Gastrocnemius medialis (tissue), 4 donors: ENCODE measurements at regions of chr17 and their contacts with region 1.

Region 1: GRCh38 chr17:71966459-71967313 is 154.1 kb upstream of the SOX9 start:
- DNase-seq: peak; percentile 83 to 86
- ATAC-seq: peak; percentile 97 to 98
- H3K4me3 ChIP-seq: peak overlapping the region in 2 of 4 donors; percentile 17 to 33
- H3K27ac ChIP-seq: peak overlapping the region; percentile 83 to 91 (median 88)
- H3K4me1 ChIP-seq: peaks cover 19 to 20% of the 10 kb centered on the region in 2 donors
- H3K27me3 ChIP-seq: no peaks in the 10 kb centered on the region
- CTCF ChIP-seq: no peak
- POLR2A ChIP-seq: peak; percentile 17 to 46

Region 2: DNA sequence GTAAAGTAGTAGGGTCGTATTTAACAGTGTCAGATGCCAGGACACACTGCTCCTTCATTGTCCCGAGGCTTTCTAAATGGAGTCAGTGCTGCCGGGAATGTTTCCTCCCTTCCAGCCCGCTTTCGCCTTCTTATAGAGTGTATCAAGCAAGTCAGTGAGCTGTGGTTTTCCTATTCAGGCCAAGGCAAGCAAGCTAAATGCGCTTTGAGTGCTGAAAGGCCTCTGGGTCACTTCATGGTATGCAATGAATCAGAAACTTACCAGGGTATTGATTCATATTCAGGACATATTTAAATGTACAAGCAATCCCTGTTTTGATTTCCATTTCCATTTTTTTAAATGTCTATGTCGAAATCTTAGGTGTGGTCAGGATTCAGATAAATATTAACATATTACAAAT is 173.7 kb before region 1 on chr17:
- in situ Hi-C with region 1: no loop called
- intact Hi-C with region 1: no loop called
- DNase-seq: no peak
- ATAC-seq: no peak
- H3K4me3 ChIP-seq: no peak overlapping the region
- H3K27ac ChIP-seq: no peak overlapping the region
- H3K4me1 ChIP-seq: no peaks in the 10 kb centered on the region
- H3K27me3 ChIP-seq: no peaks in the 10 kb centered on the region
- CTCF ChIP-seq: no peak
- POLR2A ChIP-seq: no peak

Region 3: GRCh38 chr17:71926746-71927398 is 39.8 kb before region 1 on chr17:
- in situ Hi-C with region 1: no loop called
- intact Hi-C with region 1: loop called (anchors 5 kb)
- DNase-seq: peak; percentile 15 to 21
- ATAC-seq: peak; percentile 92 to 93
- H3K4me3 ChIP-seq: no peak overlapping the region
- H3K27ac ChIP-seq: peak overlapping the region in 3 of 4 donors; percentile 21 to 63 (median 34)
- H3K4me1 ChIP-seq: peaks cover 0 to 18% of the 10 kb centered on the region in 2 donors
- H3K27me3 ChIP-seq: no peaks in the 10 kb centered on the region
- CTCF ChIP-seq: no peak
- POLR2A ChIP-seq: no peak

Region 4: DNA sequence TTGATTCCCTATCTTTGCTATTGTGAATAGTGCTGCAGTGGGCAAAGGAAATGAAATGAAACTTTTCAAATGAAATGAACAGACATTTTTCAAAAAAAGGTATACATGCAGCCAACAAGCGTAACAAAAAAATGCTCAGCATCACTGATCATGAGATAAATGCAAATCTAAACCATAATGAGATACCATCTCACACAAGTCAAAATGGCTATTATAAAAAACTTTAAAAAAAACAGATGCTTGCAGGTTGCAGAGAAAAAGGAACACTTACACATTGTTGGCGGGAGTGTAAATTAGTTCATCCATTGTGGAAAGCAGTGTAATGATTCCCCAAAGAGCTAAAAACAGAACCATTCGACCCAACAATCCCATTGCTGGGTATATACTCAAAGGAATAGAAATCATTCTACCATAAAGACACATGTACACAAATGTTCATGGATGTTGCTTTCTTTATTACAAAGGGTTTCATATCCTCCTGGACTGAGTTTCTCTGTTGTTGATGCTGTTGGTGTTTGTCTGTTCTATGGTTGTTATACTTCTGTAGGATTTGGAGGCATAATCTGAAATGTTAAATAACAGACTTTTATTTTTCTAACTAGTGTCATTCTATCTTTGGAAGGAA is 54.8 kb after region 1 on chr17:
- in situ Hi-C with region 1: no loop called
- intact Hi-C with region 1: no loop called
- DNase-seq: no peak
- ATAC-seq: no peak
- H3K4me3 ChIP-seq: no peak overlapping the region
- H3K27ac ChIP-seq: no peak overlapping the region
- H3K4me1 ChIP-seq: no peaks in the 10 kb centered on the region
- H3K27me3 ChIP-seq: peaks cover 0 to 3% (median 0%) of the 10 kb centered on the region in 3 donors
- CTCF ChIP-seq: no peak
- POLR2A ChIP-seq: no peak